SK-N-SH (cell line): ENCODE measurements at regions of chr9 and their contacts with region 1.

Region 1: GRCh38 chr9:122125158-122125508 is 32.0 kb upstream of the TTLL11 start:
- DNase-seq: peak; percentile 92
- H3K4me3 ChIP-seq: peak overlapping the region in 1 of 2 experiments; percentile 37; a peak in 1 of 4 replicates
- H3K27ac ChIP-seq: no peak overlapping the region
- H3K4me1 ChIP-seq: peaks cover 6 to 8% of the 10 kb centered on the region in 2 experiments; a peak in 2 of 4 replicates
- H3K27me3 ChIP-seq: no peaks in the 10 kb centered on the region
- CTCF ChIP-seq: peak; percentile 94
- EP300 ChIP-seq: no peak
- RAD21 ChIP-seq: peak; percentile 96

Region 2: GRCh38 chr9:122092611-122093506 is 32.3 kb before region 1 on chr9 and contains the start of gene TTLL11:
- CTCF ChIA-PET with region 1: interaction called, 327 read pairs
- POLR2A ChIA-PET with region 1: no interaction called
- DNase-seq: peak; percentile 98
- H3K4me3 ChIP-seq: peak within 1 kb of the TSS; percentile 88 to 90
- H3K27ac ChIP-seq: peak within 1 kb of the TSS in 1 of 2 experiments; percentile 14; a peak in 1 of 4 replicates
- H3K4me1 ChIP-seq: peaks cover 6 to 19% of the 10 kb centered on the region in 2 experiments; a peak in 2 of 4 replicates
- H3K27me3 ChIP-seq: no peaks in the 10 kb centered on the region
- CTCF ChIP-seq: no peak
- EP300 ChIP-seq: no peak
- RAD21 ChIP-seq: no peak
- polyA plus RNA-seq, gene TTLL11: 6.0 and 6.8 TPM in 2 replicates

Region 3: DNA sequence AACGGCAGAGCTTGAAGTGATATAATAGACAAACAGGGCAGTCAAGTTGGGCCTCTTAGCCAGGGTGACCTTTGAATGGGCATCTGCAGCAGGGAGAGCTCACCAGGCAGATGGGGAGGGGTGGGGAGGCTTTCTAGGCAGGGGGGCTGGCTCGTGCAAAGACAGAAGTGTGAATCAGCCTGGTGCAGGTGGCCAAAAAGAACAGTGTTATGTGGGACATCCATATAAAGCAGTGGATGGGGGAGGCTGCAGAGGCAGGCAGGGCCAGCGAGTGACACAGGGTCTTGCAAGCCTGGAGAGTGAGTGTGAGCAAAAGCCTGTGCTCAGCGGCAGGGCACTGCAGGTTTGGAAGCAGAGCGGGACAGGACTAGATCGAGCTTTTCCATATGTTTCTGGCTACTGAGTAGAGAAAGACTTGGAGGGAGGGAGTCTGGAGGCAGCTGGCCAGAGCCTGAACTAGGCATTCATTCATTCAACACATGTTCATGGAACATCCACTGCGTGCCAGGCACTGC is 17.8 kb before region 1 on chr9:
- CTCF ChIA-PET with region 1: interaction called, 35 read pairs
- POLR2A ChIA-PET with region 1: no interaction called
- DNase-seq: peak; percentile 12
- H3K4me3 ChIP-seq: no peak overlapping the region
- H3K27ac ChIP-seq: no peak overlapping the region
- H3K4me1 ChIP-seq: no peaks in the 10 kb centered on the region
- H3K27me3 ChIP-seq: no peaks in the 10 kb centered on the region
- CTCF ChIP-seq: no peak
- EP300 ChIP-seq: no peak
- RAD21 ChIP-seq: no peak

Region 4: DNA sequence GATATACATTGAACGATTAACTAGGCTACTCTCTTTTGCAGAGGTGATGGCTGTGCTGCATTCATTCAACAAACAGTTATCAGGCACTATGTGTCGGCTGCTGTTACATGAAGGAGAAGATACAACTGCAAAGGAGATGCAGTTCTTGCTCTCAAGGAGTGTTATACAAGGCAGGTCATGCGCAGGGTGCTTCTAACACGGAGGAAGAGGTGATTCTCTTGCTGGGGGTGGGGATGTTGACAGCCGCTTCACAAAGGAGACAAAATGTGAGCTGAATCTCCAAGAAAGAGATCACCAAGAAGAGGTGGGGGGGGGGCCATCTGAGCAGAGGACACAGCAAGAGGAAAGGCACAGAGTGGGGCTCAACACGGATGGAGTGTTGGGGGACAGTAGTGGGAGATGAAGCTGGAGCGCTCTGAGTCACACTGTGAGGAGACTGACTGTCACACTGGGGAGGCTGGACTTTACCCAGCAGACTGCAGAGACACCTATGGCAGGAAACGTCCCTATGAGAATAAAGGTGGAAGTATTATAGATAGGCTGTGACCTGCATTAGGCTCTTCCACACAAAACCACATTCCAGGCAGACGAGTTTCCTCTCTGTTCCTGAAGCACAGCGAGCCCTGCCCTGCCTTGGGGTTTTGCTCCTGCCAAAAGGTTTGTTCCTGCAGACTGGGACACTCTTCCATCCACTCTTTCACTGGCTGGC is 13.6 kb after region 1 on chr9:
- CTCF ChIA-PET with region 1: interaction called, 53 read pairs
- POLR2A ChIA-PET with region 1: no interaction called
- DNase-seq: no peak
- H3K4me3 ChIP-seq: no peak overlapping the region
- H3K27ac ChIP-seq: no peak overlapping the region
- H3K4me1 ChIP-seq: no peaks in the 10 kb centered on the region; a peak in 1 of 4 replicates
- H3K27me3 ChIP-seq: no peaks in the 10 kb centered on the region
- CTCF ChIP-seq: no peak
- EP300 ChIP-seq: no peak
- RAD21 ChIP-seq: no peak

Region 5: GRCh38 chr9:122144836-122145591 is 19.9 kb after region 1 on chr9:
- CTCF ChIA-PET with region 1: interaction called, 17 read pairs
- POLR2A ChIA-PET with region 1: no interaction called
- DNase-seq: no peak
- H3K4me3 ChIP-seq: no peak overlapping the region
- H3K27ac ChIP-seq: no peak overlapping the region
- H3K4me1 ChIP-seq: no peaks in the 10 kb centered on the region
- H3K27me3 ChIP-seq: no peaks in the 10 kb centered on the region
- CTCF ChIP-seq: peak; percentile 41
- EP300 ChIP-seq: no peak
- RAD21 ChIP-seq: no peak

Region 6: DNA sequence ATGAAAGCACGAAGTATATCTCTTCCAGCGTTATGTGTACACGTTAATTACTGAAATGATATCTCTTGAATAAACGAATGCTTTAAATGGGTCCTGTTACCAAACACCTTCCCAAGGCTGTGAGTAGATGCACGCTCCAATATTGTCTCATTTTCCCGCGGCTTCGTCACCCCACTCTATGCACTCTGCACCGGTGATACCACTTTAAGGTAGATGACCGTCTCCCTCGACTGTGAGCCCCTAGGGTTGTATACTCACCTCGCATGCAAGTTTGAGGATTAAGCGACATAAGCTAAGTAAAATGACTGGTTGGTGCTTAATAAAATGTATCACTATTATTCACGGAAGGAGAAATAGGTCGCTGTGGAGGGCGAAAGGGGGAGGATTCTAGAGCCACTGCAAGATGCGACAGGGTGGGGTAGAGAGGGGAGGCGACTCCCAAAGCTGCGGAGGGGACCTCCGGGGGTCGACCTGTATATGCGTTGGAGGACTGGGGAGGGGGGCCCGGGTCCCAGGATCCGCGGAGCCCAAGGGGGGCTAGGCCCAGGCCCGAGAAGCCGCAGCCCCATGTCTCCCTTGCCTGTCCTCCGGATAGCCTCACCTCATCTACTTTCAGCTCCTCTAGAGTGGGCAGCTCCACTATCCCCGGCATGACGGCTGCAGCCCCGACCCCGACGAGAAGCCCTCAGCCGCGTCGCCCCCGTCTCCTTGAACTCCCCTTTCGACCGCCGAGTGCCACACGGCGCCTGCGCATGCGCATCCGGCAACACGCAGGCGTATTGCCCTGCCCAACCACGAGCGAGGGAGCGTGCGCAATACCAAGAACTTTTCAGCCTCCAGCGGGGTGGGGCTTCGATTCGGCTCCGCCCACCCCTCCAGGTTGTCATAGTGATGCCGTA is 34.1 kb after region 1 on chr9 and contains the starts of genes MORN5 and NDUFA8:
- CTCF ChIA-PET with region 1: interaction called, 46 read pairs
- POLR2A ChIA-PET with region 1: no interaction called
- DNase-seq: peak; percentile 98
- H3K4me3 ChIP-seq: peak within 1 kb of the TSS; percentile 75 to 96
- H3K27ac ChIP-seq: peak within 1 kb of the TSS in 1 of 2 experiments; percentile 85; a peak in 1 of 4 replicates
- H3K4me1 ChIP-seq: peaks cover 0 to 2% of the 10 kb centered on the region in 2 experiments; a peak in 2 of 4 replicates
- H3K27me3 ChIP-seq: no peaks in the 10 kb centered on the region
- CTCF ChIP-seq: no peak
- EP300 ChIP-seq: no peak
- RAD21 ChIP-seq: no peak
- polyA plus RNA-seq, gene MORN5: not detected in 2 replicates
- polyA plus RNA-seq, gene NDUFA8: 97.4 and 116 TPM in 2 replicates

Region 7: GRCh38 chr9:122338994-122339393 is 213.9 kb after region 1 on chr9:
- CTCF ChIA-PET with region 1: interaction called, 528 read pairs
- POLR2A ChIA-PET with region 1: no interaction called
- DNase-seq: peak; percentile 80
- H3K4me3 ChIP-seq: no peak overlapping the region
- H3K27ac ChIP-seq: no peak overlapping the region; a peak in 1 of 4 replicates
- H3K4me1 ChIP-seq: peaks cover 0 to 15% of the 10 kb centered on the region in 2 experiments; a peak in 1 of 4 replicates
- H3K27me3 ChIP-seq: no peaks in the 10 kb centered on the region
- CTCF ChIP-seq: no peak
- EP300 ChIP-seq: no peak
- RAD21 ChIP-seq: no peak

Region 8: DNA sequence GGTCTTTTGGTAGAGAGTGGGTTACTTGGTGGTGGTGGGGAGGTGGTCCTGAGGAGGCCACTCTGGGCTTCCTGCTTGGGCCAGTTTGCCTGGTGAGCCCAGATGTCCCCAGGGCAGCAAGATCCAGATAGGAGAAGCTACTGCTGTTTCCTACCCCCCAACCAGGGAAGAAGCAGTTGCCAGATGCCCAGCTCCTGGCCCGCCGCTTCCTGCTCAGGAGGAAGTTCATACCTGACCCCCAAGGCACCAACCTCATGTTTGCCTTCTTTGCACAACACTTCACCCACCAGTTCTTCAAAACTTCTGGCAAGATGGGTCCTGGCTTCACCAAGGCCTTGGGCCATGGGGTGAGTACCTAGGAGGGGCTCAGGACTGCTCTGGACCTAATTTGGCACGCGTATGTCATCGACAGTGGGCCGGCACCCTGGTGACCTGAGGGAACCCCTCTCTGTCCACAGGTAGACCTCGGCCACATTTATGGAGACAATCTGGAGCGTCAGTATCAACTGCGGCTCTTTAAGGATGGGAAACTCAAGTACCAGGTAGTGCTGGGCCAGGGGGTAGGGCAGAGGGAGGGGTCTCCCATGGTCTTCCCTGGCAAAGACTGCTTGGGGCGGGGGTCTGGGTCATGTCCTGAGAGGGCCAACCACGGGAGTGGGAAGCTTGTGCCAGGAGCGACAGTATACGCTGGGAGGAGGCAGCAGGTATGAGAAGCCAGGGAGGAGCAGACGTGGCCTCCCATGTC is 256.2 kb after region 1 on chr9:
- CTCF ChIA-PET with region 1: no interaction called
- POLR2A ChIA-PET with region 1: no interaction called
- DNase-seq: no peak
- H3K4me3 ChIP-seq: no peak overlapping the region
- H3K27ac ChIP-seq: no peak overlapping the region
- H3K4me1 ChIP-seq: peaks cover 11 to 18% of the 10 kb centered on the region in 2 experiments; a peak in 2 of 4 replicates
- H3K27me3 ChIP-seq: no peaks in the 10 kb centered on the region
- CTCF ChIP-seq: no peak
- EP300 ChIP-seq: no peak
- RAD21 ChIP-seq: no peak

Region 9: DNA sequence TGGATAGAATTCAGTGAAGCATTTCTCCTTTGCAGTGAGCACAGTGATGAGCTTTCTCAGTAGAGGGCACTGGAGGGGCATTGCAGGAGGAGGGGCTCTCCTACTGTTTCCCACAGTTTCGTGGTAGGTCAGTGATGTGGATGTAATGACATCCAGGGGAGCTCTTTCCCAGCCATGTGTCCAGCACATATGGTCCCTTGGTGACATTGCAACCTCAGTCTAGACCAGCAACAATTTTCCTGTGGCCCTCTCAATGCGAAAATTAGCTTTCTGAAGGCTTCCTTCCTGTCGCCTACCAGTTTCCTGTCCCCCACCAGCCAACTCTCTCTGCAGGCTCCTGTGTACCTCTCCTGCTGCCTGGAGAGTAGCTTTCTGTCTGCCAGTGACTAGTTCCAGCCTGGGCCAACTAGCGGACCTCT is 710.2 kb after region 1 on chr9:
- CTCF ChIA-PET with region 1: no interaction called
- POLR2A ChIA-PET with region 1: no interaction called
- DNase-seq: peak; percentile 51
- H3K4me3 ChIP-seq: no peak overlapping the region
- H3K27ac ChIP-seq: no peak overlapping the region
- H3K4me1 ChIP-seq: no peaks in the 10 kb centered on the region
- H3K27me3 ChIP-seq: no peaks in the 10 kb centered on the region
- CTCF ChIP-seq: peak; percentile 10; the same call in 1 of the 2 replicates
- EP300 ChIP-seq: no peak
- RAD21 ChIP-seq: peak; percentile 45